Activated T-helper 1 cell treated with anti-CD3 and anti-CD28 coated beads, Interleukin-12 subunit alpha, Interleukin-12 subunit beta, Interleukin-2, Interleukin-4 antibody, amounts not matched to agents 30 ng/mL and 10 ng/mL and 1 ng/mL, durations not matched to agents 14 hours and 24 hours and 36 hours (primary cell): ENCODE measurements at regions of chr6 and their contacts with region 1.

Region 1: GRCh38 chr6:5471044-5471443 is 209.7 kb downstream of the FARS2 start:
- DNase-seq: peak; percentile 18
- H3K4me3 Mint-ChIP-seq: no peak overlapping the region
- H3K27ac Mint-ChIP-seq: no peak overlapping the region
- H3K4me1 Mint-ChIP-seq: no peaks in the 10 kb centered on the region
- H3K27me3 Mint-ChIP-seq: no peaks in the 10 kb centered on the region

Region 2: GRCh38 chr6:4788953-4789584 is 682.0 kb before region 1 on chr6:
- intact Hi-C with region 1: no loop called
- DNase-seq: no peak
- H3K4me3 Mint-ChIP-seq: no peak overlapping the region
- H3K27ac Mint-ChIP-seq: no peak overlapping the region
- H3K4me1 Mint-ChIP-seq: peaks cover 17% of the 10 kb centered on the region
- H3K27me3 Mint-ChIP-seq: no peaks in the 10 kb centered on the region

Region 3: GRCh38 chr6:5626727-5627426 is 155.8 kb after region 1 on chr6:
- intact Hi-C with region 1: loop called (anchors 10 kb)
- DNase-seq: peak; percentile 1
- H3K4me3 Mint-ChIP-seq: no peak overlapping the region
- H3K27ac Mint-ChIP-seq: peak overlapping the region; percentile 40
- H3K4me1 Mint-ChIP-seq: peaks cover 18% of the 10 kb centered on the region
- H3K27me3 Mint-ChIP-seq: no peaks in the 10 kb centered on the region

Region 4: GRCh38 chr6:5995949-5996713 is 525.1 kb after region 1 on chr6:
- intact Hi-C with region 1: loop called (anchors 2 kb)
- DNase-seq: no peak
- H3K4me3 Mint-ChIP-seq: peak overlapping the region; percentile 85
- H3K27ac Mint-ChIP-seq: peak overlapping the region; percentile 69
- H3K4me1 Mint-ChIP-seq: peaks cover 59% of the 10 kb centered on the region
- H3K27me3 Mint-ChIP-seq: peaks cover 88% of the 10 kb centered on the region

Region 5: DNA sequence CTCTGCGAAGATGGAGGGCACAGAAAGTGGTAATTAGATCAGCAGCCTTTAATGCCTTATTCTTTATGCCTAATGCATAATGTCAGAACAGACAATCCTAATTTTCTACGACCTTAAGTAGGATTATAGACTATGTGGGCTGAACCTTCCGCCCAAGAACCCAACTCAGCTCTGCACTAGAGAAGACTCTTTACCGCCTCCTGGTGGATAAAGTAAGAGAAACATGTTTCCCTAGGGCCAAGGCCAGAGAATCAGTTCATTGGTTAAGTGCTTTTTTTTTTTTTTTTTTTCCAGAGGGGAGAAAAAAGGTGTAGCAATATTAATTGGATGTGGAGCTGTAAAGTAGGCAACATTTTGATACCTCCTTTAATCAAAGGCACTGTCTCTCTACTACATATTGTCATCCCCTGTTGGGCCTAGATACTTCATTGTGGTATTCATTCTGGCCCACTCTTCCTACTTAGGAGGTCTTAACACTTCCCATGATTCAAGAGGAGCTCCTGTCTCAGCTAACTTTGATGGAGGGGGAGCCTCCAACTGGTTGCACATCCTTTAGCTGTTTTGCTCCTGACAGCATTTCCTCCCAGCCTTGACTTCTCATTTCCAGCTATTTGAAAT is 660.6 kb after region 1 on chr6:
- intact Hi-C with region 1: loop called (anchors 2 kb)
- DNase-seq: no peak
- H3K4me3 Mint-ChIP-seq: no peak overlapping the region
- H3K27ac Mint-ChIP-seq: no peak overlapping the region
- H3K4me1 Mint-ChIP-seq: no peaks in the 10 kb centered on the region
- H3K27me3 Mint-ChIP-seq: peaks cover 2% of the 10 kb centered on the region